Mammary epithelial cell (primary cell): ENCODE measurements at regions of chr9 and their contacts with region 1.

Region 1: DNA sequence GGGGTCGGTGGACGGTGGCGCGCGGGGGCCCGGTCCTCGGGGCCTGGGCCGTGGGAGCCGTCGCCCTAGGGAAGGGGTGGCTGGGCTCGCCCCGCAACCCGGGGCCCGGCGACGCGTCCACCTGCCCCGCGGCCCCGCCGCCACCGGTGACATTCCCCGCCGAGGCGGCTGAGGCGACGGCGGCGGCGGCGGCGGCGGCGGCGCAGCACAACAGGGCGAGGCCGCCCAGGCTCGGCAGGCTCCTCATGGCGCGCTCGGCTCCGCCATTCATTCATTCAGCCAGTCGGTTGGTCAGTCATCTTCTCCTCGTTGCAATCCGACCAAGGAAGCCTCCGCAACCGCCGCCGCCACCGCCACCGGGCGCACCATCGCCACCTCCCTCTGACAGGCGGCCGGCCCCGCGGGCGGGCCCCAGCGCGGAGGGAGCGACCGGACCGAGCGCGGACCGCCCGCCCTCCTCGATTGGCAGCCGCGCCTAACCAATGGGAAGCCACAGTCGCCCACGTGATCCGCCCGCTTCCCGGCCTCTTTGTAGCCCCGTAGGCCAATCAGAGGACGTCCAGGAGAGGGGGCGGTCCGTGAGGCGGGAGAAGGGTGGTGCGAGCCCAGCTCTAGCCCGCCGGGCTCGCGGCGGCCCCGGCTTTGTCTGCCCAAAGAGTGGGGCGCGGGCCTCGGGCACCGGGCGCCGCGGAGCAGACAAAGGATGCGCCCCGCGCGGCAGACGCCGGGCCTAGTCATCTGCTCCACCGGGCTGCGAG is at the start of gene MEGF9:
- DNase-seq: peak; percentile 97
- H3K4me3 ChIP-seq: peak within 1 kb of the TSS; percentile 85 to 90 (median 89)
- H3K27ac ChIP-seq: peak within 1 kb of the TSS; percentile 57
- H3K4me1 ChIP-seq: peaks cover 27% of the 10 kb centered on the region
- H3K27me3 ChIP-seq: no peaks in the 10 kb centered on the region
- CTCF ChIP-seq: no peak
- total RNA-seq, gene MEGF9: 10.9 to 31.5 TPM

Region 2: GRCh38 chr9:120619751-120620655 is 94.3 kb before region 1 on chr9:
- CTCF ChIA-PET with region 1: no interaction called
- dilution Hi-C with region 1: no loop called
- in situ Hi-C with region 1: loop called in 1 of 2 experiments (anchors 10 kb)
- intact Hi-C with region 1: loop called (anchors 1 kb)
- DNase-seq: peak; percentile 55
- H3K4me3 ChIP-seq: no peak overlapping the region
- H3K27ac ChIP-seq: peak overlapping the region; percentile 7
- H3K4me1 ChIP-seq: peaks cover 18% of the 10 kb centered on the region
- H3K27me3 ChIP-seq: no peaks in the 10 kb centered on the region
- CTCF ChIP-seq: peak; percentile 74 to 77

Region 3: GRCh38 chr9:120655005-120655622 is 59.2 kb before region 1 on chr9:
- CTCF ChIA-PET with region 1: no interaction called
- dilution Hi-C with region 1: no loop called
- in situ Hi-C with region 1: no loop called
- intact Hi-C with region 1: loop called (anchors 5 kb)
- DNase-seq: peak; percentile 73
- H3K4me3 ChIP-seq: no peak overlapping the region
- H3K27ac ChIP-seq: no peak overlapping the region
- H3K4me1 ChIP-seq: peaks cover 8% of the 10 kb centered on the region
- H3K27me3 ChIP-seq: no peaks in the 10 kb centered on the region
- CTCF ChIP-seq: no peak

Region 4: DNA sequence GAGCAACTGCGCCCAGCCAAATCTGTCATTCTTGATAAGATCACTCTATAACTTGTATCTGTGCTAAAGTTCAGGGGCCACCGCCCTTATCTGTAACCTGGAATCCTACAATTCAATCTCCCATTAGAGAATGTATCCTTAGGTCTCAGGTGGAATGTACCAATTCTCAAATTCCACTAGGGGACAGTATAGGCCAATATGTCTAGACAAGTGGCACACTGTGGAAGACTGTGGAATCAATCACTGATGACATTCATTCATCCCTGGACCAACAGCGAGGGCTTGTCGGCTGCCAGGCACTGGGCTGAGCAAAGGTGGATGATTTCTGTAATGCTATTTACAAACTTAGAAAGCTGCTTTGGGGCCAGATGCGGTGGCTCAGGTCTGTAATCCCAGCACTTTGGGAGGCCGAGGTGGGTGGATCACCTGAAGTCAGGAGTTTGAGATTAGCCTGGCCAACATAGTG is 28.7 kb after region 1 on chr9:
- CTCF ChIA-PET with region 1: no interaction called
- dilution Hi-C with region 1: no loop called
- in situ Hi-C with region 1: no loop called
- intact Hi-C with region 1: no loop called
- DNase-seq: peak; percentile 41
- H3K4me3 ChIP-seq: no peak overlapping the region
- H3K27ac ChIP-seq: no peak overlapping the region
- H3K4me1 ChIP-seq: no peaks in the 10 kb centered on the region
- H3K27me3 ChIP-seq: no peaks in the 10 kb centered on the region
- CTCF ChIP-seq: peak; percentile 93 to 94

Region 5: DNA sequence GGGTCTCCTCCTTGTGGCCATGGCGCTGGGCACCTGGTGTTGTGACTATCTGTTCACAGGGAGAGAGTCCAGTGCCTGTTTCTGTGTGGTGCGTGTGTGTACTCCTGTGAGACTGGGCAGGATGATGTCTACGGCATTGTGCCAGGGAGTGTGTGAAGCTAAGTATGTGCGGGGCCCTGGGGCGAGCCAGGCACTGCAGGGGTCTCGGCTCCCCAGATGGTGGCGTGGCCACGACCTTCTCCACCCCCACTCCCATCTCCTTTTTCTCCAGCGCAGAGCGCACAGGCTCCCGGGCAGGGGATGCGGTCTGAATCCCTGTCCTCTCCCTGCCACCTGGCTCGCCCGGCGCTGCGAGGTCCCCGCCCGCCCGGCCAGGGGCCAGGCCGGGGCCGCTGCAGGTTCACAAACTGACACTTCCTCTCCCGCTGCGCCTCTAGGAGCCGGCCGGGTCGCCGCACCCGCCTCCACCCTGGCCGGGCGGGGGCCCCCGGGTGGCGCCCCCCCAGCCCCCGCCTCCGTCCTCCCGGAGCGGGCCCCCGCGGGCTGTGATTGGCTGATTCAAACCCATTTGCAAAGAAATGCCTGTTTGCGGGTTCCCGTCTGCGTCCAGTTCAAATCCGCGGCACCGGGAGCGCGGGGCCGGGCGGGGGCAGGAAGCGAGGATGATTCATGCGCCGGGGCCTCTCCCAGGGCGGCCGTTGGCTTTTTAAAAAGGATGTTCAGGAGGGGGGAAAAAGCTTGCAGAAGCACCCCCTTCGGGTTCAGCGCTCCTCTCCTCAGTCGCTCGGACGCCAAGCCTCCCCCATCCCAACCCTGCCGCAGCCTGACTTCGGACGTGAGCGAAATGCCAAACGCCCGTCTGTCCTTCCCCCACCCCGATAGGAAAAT is 161.9 kb after region 1 on chr9:
- CTCF ChIA-PET with region 1: no interaction called
- dilution Hi-C with region 1: no loop called
- in situ Hi-C with region 1: no loop called
- intact Hi-C with region 1: loop called (anchors 5 kb)
- DNase-seq: peak; percentile 83
- H3K4me3 ChIP-seq: peak overlapping the region; percentile 66 to 74 (median 69)
- H3K27ac ChIP-seq: peak overlapping the region; percentile 70
- H3K4me1 ChIP-seq: peaks cover 32% of the 10 kb centered on the region
- H3K27me3 ChIP-seq: no peaks in the 10 kb centered on the region
- CTCF ChIP-seq: no peak